ENCODE measurements at regions of chr11 and their contacts with region 1.

Region 1: GRCh38 chr11:110429731-110430266 is at the start of gene FDX1:
- DNase-seq: peak; percentile 81
- ATAC-seq: peak; percentile 84
- H3K4me3 ChIP-seq: peak within 1 kb of the TSS; percentile 78
- H3K27ac ChIP-seq: peak within 1 kb of the TSS; percentile 40
- H3K4me1 ChIP-seq: peaks cover 27% of the 10 kb centered on the region
- H3K27me3 ChIP-seq: no peaks in the 10 kb centered on the region
- CTCF ChIP-seq: peak; percentile 48; the same call in 1 of the 2 replicates
- total RNA-seq, gene FDX1: 14.8 and 16.6 TPM in 2 replicates

Region 2: GRCh38 chr11:109946322-109946846 is 483.4 kb before region 1 on chr11:
- CTCF ChIA-PET with region 1: no interaction called
- POLR2A ChIA-PET with region 1: interaction called, 6 read pairs
- intact Hi-C with region 1: loop called (anchors 2 kb)
- DNase-seq: peak; percentile 98
- ATAC-seq: peak; percentile 95
- H3K4me3 ChIP-seq: peak overlapping the region; percentile 53; the same call in 1 of the 2 replicates
- H3K27ac ChIP-seq: peak overlapping the region; percentile 80
- H3K4me1 ChIP-seq: peaks cover 20% of the 10 kb centered on the region
- H3K27me3 ChIP-seq: no peaks in the 10 kb centered on the region
- CTCF ChIP-seq: peak; percentile 99

Region 3: GRCh38 chr11:110077831-110078325 is 351.9 kb before region 1 on chr11:
- CTCF ChIA-PET with region 1: no interaction called
- POLR2A ChIA-PET with region 1: no interaction called
- intact Hi-C with region 1: loop called (anchors 5 kb)
- DNase-seq: peak; percentile 92
- ATAC-seq: peak; percentile 54
- H3K4me3 ChIP-seq: peak overlapping the region; percentile 27; the same call in 1 of the 2 replicates
- H3K27ac ChIP-seq: peak overlapping the region; percentile 95
- H3K4me1 ChIP-seq: peaks cover 34% of the 10 kb centered on the region
- H3K27me3 ChIP-seq: no peaks in the 10 kb centered on the region
- CTCF ChIP-seq: no peak

Region 4: DNA sequence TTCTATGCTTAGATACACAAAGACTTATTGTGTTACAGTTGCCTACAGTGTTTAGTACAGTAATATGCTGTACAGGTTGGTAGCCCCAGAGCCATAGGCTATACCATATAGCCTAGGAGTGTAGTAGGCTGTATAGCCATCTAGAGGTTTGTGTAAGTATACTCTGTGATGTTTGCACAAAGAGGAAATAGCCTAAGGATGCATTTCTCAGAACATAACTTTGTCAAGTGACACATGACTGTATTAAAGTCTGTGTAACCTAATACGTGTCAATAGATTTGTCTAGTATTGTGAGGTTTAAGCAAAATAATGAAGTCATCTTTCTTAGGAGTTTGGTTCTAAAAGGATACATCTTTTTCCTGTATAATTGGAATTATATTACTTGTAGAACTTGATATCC is 331.2 kb before region 1 on chr11:
- CTCF ChIA-PET with region 1: no interaction called
- POLR2A ChIA-PET with region 1: interaction called, 6 read pairs
- intact Hi-C with region 1: loop called (anchors 5 kb)
- DNase-seq: peak; percentile 85
- ATAC-seq: peak; percentile 72
- H3K4me3 ChIP-seq: no peak overlapping the region
- H3K27ac ChIP-seq: peak overlapping the region; percentile 32
- H3K4me1 ChIP-seq: peaks cover 52% of the 10 kb centered on the region
- H3K27me3 ChIP-seq: no peaks in the 10 kb centered on the region
- CTCF ChIP-seq: peak; percentile 51

Region 5: DNA sequence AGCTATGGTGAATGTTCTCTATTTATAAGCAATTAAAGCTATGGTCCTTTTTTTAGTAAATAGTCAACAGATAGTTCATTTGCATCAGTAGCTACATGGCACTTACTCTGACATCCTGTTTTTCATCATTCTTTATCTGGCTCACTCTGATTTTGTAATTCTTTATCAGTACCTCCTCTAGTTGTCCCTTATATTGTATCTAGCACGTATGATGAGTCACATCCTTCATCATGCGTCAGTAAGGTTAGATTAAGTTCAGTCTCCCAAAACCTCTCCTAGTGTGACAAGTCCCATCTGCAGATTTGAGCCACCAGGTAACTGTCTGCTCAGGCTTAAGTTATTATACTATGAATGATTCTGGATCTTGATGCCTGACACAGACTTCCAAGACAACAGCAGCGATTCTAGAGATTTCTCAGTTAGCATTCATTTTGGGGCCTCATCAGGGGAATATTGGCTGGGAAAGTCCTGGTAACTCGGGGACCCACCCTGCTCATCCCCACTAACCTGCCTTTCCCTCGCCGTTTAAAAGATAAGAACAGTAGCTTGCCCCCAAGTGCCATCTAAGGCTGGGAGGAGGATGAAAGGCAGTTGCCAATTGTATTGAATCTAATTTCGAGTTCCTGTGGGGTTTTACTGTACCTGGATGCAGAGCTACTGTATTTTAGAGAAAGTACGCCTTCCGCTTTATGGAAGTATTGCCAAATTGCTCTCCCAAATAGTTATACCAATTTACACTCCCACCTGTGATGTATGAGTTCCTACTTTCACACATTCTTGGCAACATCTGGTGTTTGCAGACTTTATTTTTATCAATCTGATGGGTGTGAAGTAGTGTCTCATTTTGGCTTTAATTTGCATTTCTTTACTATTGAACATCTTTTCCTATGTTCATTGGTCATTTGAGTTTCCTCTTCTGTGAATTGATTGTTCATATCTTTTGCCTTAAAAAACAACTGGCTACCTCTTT is 280.7 kb before region 1 on chr11:
- CTCF ChIA-PET with region 1: no interaction called
- POLR2A ChIA-PET with region 1: no interaction called
- intact Hi-C with region 1: loop called (anchors 5 kb)
- DNase-seq: peak; percentile 90
- ATAC-seq: peak; percentile 89
- H3K4me3 ChIP-seq: no peak overlapping the region
- H3K27ac ChIP-seq: peak overlapping the region; percentile 93
- H3K4me1 ChIP-seq: peaks cover 30% of the 10 kb centered on the region
- H3K27me3 ChIP-seq: no peaks in the 10 kb centered on the region
- CTCF ChIP-seq: no peak

Region 6: GRCh38 chr11:110186867-110187266 is 242.9 kb before region 1 on chr11:
- CTCF ChIA-PET with region 1: no interaction called
- POLR2A ChIA-PET with region 1: no interaction called
- intact Hi-C with region 1: no loop called
- DNase-seq: no peak
- ATAC-seq: no peak
- H3K4me3 ChIP-seq: no peak overlapping the region
- H3K27ac ChIP-seq: no peak overlapping the region
- H3K4me1 ChIP-seq: peaks cover 37% of the 10 kb centered on the region
- H3K27me3 ChIP-seq: no peaks in the 10 kb centered on the region
- CTCF ChIP-seq: no peak

Region 7: GRCh38 chr11:110376711-110377324 is 53.0 kb before region 1 on chr11:
- CTCF ChIA-PET with region 1: interaction called, 3 read pairs
- POLR2A ChIA-PET with region 1: no interaction called
- intact Hi-C with region 1: loop called (anchors 1 kb)
- DNase-seq: peak; percentile 91
- ATAC-seq: peak; percentile 84
- H3K4me3 ChIP-seq: peak overlapping the region; percentile 65
- H3K27ac ChIP-seq: 0 out of 2 replicates have a peak overlapping the region, but pooled peaks have one; percentile 9
- H3K4me1 ChIP-seq: peaks cover 21% of the 10 kb centered on the region
- H3K27me3 ChIP-seq: no peaks in the 10 kb centered on the region
- CTCF ChIP-seq: peak; percentile 98

Region 8: GRCh38 chr11:110415081-110415480 is 14.7 kb before region 1 on chr11:
- CTCF ChIA-PET with region 1: no interaction called
- POLR2A ChIA-PET with region 1: no interaction called
- intact Hi-C with region 1: no loop called
- DNase-seq: no peak
- ATAC-seq: peak; percentile 42
- H3K4me3 ChIP-seq: no peak overlapping the region
- H3K27ac ChIP-seq: no peak overlapping the region
- H3K4me1 ChIP-seq: peaks cover 3% of the 10 kb centered on the region; the same call in 1 of the 2 replicates
- H3K27me3 ChIP-seq: no peaks in the 10 kb centered on the region
- CTCF ChIP-seq: no peak

Region 9: GRCh38 chr11:110447897-110448745 is 18.3 kb after region 1 on chr11:
- CTCF ChIA-PET with region 1: interaction called, 23 read pairs
- POLR2A ChIA-PET with region 1: no interaction called
- intact Hi-C with region 1: no loop called
- DNase-seq: peak; percentile 88
- ATAC-seq: peak; percentile 49; the same call in 1 of the 2 replicates
- H3K4me3 ChIP-seq: no peak overlapping the region
- H3K27ac ChIP-seq: peak overlapping the region; percentile 79
- H3K4me1 ChIP-seq: peaks cover 21% of the 10 kb centered on the region
- H3K27me3 ChIP-seq: no peaks in the 10 kb centered on the region
- CTCF ChIP-seq: peak; percentile 90